Dorsolateral prefrontal cortex (tissue), 120 donors: ENCODE measurements at regions of chr1 and their contacts with region 1.

Region 1: GRCh38 chr1:43706598-43707495 is 489 bp upstream of the ST3GAL3 start:
- DNase-seq: peak; percentile 84 to 96 (median 93)
- H3K4me3 ChIP-seq: peak overlapping the region; percentile 44 to 97 (median 88)
- H3K27ac ChIP-seq: peak overlapping the region in 45 of 59 donors; percentile 2 to 91 (median 71)
- H3K27me3 ChIP-seq: no peaks in the 10 kb centered on the region
- CTCF ChIP-seq: peak in 12 of 56 donors; percentile 12 to 37 (median 20)

Region 2: GRCh38 chr1:43454266-43455011 is 252.4 kb before region 1 on chr1:
- intact Hi-C with region 1: loop called in 1 of 2 experiments (anchors 10 kb)
- DNase-seq: peak; percentile 49 to 87 (median 79)
- H3K4me3 ChIP-seq: peak overlapping the region; percentile 43 to 78 (median 65)
- H3K27ac ChIP-seq: peak overlapping the region in 58 of 59 donors; percentile 76 to 96 (median 92)
- H3K27me3 ChIP-seq: no peaks in the 10 kb centered on the region
- CTCF ChIP-seq: peak in 8 of 56 donors; percentile 4 to 30 (median 12)